Naive thymus-derived CD8-positive, alpha-beta T cell (primary cell): ENCODE measurements at regions of chr5 and their contacts with region 1.

Region 1: GRCh38 chr5:90409318-90410177 is at the start of gene CETN3:
- DNase-seq: peak; percentile 77 to 96 (median 90)
- ATAC-seq: peak; percentile 92 to 93
- H3K4me3 Mint-ChIP-seq: no peak within 1 kb of the TSS
- H3K27ac Mint-ChIP-seq: no peak within 1 kb of the TSS
- H3K4me1 Mint-ChIP-seq: peaks cover 8 to 26% (median 17%) of the 10 kb centered on the region in 4 donors
- H3K27me3 Mint-ChIP-seq: no peaks in the 10 kb centered on the region
- polyA plus RNA-seq, gene CETN3: 19.0 to 33.0 (median 26.7) TPM

Region 2: DNA sequence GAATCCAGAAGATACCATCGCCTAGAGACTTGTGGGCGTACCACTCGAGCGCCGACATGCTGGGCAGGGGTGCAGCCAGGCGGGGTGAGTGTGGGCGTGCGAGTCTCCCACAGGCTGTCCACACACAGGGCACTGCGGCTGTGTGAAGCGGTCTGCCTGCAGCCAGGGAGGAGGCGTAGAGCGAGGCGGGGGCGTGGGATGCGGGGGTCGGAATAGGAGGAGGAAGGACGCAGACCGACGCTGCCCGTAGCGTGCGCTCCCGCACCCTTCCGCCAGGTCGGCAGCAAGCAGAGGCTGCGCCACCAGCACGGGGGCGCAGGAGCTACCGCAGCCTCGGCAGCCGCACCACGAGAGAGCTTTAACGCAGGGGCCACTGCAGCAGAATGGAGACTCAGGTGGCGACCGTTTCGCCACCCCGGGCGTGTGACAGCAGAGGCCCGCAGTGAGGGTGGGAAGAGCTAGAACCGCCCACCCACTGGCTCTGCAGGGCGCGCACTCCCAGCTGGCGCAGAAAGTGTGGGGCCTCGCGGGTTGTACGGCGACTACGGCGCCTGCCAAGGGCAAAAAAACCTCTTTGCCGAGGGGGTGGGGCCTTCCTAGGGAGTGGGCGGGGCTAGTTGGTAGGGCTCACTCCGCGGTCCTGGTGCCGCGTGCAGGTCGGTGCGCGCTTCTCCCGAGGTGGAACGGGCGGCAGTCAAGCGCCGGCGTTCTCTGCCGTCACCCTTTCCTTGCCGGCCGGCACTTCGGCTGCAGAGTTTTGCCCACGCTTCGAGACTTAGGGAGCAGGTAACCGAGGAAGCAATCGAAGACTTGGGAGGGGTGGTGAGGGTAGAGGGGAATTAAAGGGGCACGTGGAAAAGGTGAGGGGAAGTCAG is 64.9 kb after region 1 on chr5 and contains the starts of genes MBLAC2 and POLR3G:
- POLR2A ChIA-PET with region 1: interaction called, 69 read pairs
- DNase-seq: peak; percentile 84 to 96 (median 92)
- ATAC-seq: peak; percentile 84 to 86
- H3K4me3 Mint-ChIP-seq: peak within 1 kb of the TSS; percentile 92 to 99 (median 98)
- H3K27ac Mint-ChIP-seq: peak within 1 kb of the TSS; percentile 94 to 98 (median 96)
- H3K4me1 Mint-ChIP-seq: peaks cover 23 to 39% (median 35%) of the 10 kb centered on the region in 4 donors
- H3K27me3 Mint-ChIP-seq: no peaks in the 10 kb centered on the region
- polyA plus RNA-seq, gene MBLAC2: 4.7 to 5.7 (median 5.3) TPM
- polyA plus RNA-seq, gene POLR3G: 1.9 to 2.8 (median 2.1) TPM